Dendritic cell treated with granulocyte-macrophage colony-stimulating factor and Interleukin-4, amounts not matched to agents 40 ng/mL and 50 ng/mL, for 4 days (primary cell): ENCODE measurements at regions of chr3 and their contacts with region 1.

Region 1: DNA sequence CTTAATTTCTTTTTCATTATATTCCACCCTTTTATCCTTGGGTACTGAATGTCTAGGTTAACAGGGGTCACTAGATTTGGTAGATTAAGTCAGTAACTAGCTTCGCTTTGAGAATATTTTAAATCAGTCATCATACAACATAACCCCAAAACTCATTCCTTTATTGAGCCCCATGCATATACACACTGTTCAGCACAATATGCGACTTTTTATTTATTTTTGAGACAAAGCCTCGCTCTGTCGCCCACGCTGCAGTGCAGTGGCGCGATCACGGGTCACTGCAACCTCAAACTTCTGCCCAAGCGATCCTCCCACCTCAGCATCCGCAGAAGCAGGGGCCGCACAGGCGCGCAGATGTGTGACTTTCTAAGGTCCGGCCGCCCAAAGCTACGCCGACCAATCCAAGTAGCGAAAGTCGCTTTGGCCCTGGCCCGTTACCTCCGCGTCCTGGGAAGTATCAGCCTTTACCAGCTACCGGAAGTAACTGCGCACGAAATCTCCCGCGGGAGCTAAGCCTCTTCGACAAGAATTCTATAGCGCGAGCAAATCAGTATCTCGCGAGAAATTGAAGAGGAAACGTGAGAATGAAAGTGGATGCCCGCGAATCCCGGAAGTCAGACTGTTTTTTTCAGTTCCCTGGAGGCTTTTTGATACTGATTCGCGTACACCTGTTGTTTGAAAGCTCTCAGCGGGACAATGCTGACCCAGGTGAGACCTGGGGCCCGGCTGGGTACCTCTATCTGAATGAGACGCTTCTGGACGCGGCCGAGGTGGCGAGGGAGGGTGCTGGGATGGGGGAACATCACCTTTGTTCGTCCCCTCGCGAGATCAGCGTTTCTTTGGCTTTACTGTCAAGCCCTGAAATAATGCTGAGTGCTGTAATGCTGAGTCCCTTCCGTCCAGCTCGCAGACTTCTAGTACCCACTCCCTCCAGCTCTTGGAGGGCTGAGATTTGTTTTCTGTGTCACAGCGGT is at the starts of genes DHFR2 and NSUN3:
- H3K4me3 Mint-ChIP-seq: peak within 1 kb of the TSS; percentile 94
- H3K27ac Mint-ChIP-seq: peak within 1 kb of the TSS; percentile 100
- H3K4me1 Mint-ChIP-seq: peaks cover 41% of the 10 kb centered on the region
- H3K27me3 Mint-ChIP-seq: no peaks in the 10 kb centered on the region

Region 2: GRCh38 chr3:93979833-93980676 is 82.7 kb before region 1 on chr3 and contains the start of gene ARL13B:
- intact Hi-C with region 1: loop called (anchors 1 kb)
- H3K4me3 Mint-ChIP-seq: peak within 1 kb of the TSS; percentile 90
- H3K27ac Mint-ChIP-seq: peak within 1 kb of the TSS; percentile 92
- H3K4me1 Mint-ChIP-seq: peaks cover 17% of the 10 kb centered on the region
- H3K27me3 Mint-ChIP-seq: no peaks in the 10 kb centered on the region